ENCODE measurements at regions of chr17 and their contacts with region 1.

Region 1: DNA sequence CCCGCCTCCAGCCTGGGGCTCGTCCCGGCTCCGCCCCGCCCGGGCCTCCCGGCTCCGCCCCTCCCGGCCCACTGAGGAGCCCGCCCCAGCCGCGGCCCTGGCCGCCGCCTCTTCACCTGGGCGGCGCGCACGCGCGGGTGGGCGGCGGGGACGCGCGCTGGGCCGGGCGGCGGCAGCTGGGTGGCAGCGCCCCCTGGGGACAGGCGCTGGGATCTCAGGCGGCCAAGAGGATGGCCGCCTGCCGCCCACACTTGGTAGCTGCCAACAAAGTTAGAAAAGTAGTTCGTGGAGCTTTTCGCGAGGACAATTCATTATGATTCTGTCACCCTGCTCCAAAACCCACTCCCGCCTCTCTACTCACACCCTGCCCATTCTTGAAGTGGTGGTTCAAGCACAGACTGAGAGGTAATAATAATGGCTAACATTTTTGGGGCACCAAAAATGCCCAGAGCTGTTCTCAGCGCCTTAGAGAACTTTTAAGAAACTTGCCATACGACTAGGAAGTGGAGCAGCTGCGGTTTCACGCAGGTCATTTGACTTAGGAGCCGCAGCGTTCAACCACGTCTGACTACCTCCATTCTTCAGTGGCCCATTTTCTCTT is 340 bp upstream of the MYO1D start:
- DNase-seq: peak; percentile 85 to 97 (median 92)
- ATAC-seq: peak; percentile 94
- H3K4me3 ChIP-seq: peak overlapping the region; percentile 43 to 76
- H3K4me3 Mint-ChIP-seq: peak overlapping the region; percentile 80
- H3K27ac ChIP-seq: peak overlapping the region; percentile 8 to 66
- H3K27ac Mint-ChIP-seq: peak overlapping the region; percentile 88
- H3K4me1 ChIP-seq: peaks cover 6% of the 10 kb centered on the region
- H3K4me1 Mint-ChIP-seq: peaks cover 13% of the 10 kb centered on the region
- H3K27me3 ChIP-seq: peaks cover 0 to 3% of the 10 kb centered on the region in 2 experiments
- H3K27me3 Mint-ChIP-seq: peaks cover 7% of the 10 kb centered on the region
- CTCF ChIP-seq: peak; percentile 74

Region 2: GRCh38 chr17:31900877-31901276 is 976.4 kb before region 1 on chr17:
- CTCF ChIA-PET with region 1: no interaction called
- POLR2A ChIA-PET with region 1: no interaction called
- intact Hi-C with region 1: loop called in 1 of 2 experiments (anchors 5 kb)
- DNase-seq: no peak
- ATAC-seq: no peak
- H3K4me3 ChIP-seq: peak overlapping the region; percentile 65 to 72
- H3K4me3 Mint-ChIP-seq: no peak overlapping the region
- H3K27ac ChIP-seq: peak overlapping the region; percentile 57 to 71
- H3K27ac Mint-ChIP-seq: no peak overlapping the region
- H3K4me1 ChIP-seq: peaks cover 10% of the 10 kb centered on the region
- H3K4me1 Mint-ChIP-seq: peaks cover 18% of the 10 kb centered on the region
- H3K27me3 ChIP-seq: no peaks in the 10 kb centered on the region
- H3K27me3 Mint-ChIP-seq: no peaks in the 10 kb centered on the region
- CTCF ChIP-seq: no peak

Region 3: DNA sequence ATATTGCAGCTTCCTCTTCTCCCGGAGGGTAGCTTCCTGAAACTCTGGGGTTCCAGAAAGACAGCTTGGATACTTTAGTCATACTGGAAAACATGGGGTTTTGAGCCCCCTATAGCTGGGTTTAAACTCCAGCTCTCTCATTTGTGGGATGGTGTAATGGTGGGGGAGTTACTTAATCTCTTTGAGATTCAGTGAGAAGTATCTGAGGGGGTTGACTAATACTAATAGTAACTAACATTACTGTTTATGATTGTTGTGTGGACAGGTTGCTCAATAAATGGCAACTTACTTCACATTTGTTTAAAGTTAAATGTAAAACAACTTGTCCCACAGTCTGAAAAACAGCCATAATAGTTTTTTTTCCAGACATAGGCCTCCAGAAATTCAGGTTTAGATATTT is 945.5 kb before region 1 on chr17:
- CTCF ChIA-PET with region 1: no interaction called
- POLR2A ChIA-PET with region 1: no interaction called
- intact Hi-C with region 1: loop called (anchors 5 to 10 kb)
- DNase-seq: peak in 1 of 9 experiments; percentile 5
- ATAC-seq: no peak
- H3K4me3 ChIP-seq: no peak overlapping the region
- H3K4me3 Mint-ChIP-seq: no peak overlapping the region
- H3K27ac ChIP-seq: no peak overlapping the region
- H3K27ac Mint-ChIP-seq: no peak overlapping the region
- H3K4me1 ChIP-seq: no peaks in the 10 kb centered on the region
- H3K4me1 Mint-ChIP-seq: peaks cover 3% of the 10 kb centered on the region
- H3K27me3 ChIP-seq: no peaks in the 10 kb centered on the region
- H3K27me3 Mint-ChIP-seq: no peaks in the 10 kb centered on the region
- CTCF ChIP-seq: no peak

Region 4: GRCh38 chr17:32341857-32342602 is 535.2 kb before region 1 on chr17 and contains the start of gene C17orf75:
- CTCF ChIA-PET with region 1: no interaction called
- POLR2A ChIA-PET with region 1: no interaction called
- intact Hi-C with region 1: loop called in 1 of 2 experiments (anchors 5 kb)
- DNase-seq: peak; percentile 64 to 89 (median 79)
- ATAC-seq: peak; percentile 90
- H3K4me3 ChIP-seq: peak within 1 kb of the TSS; percentile 48 to 76
- H3K4me3 Mint-ChIP-seq: peak within 1 kb of the TSS; percentile 92
- H3K27ac ChIP-seq: peak within 1 kb of the TSS; percentile 49 to 84
- H3K27ac Mint-ChIP-seq: peak within 1 kb of the TSS; percentile 92
- H3K4me1 ChIP-seq: peaks cover 21% of the 10 kb centered on the region
- H3K4me1 Mint-ChIP-seq: peaks cover 24% of the 10 kb centered on the region
- H3K27me3 ChIP-seq: no peaks in the 10 kb centered on the region
- H3K27me3 Mint-ChIP-seq: no peaks in the 10 kb centered on the region
- CTCF ChIP-seq: no peak
- total RNA-seq, gene C17orf75: 12.5 to 14.0 TPM

Region 5: DNA sequence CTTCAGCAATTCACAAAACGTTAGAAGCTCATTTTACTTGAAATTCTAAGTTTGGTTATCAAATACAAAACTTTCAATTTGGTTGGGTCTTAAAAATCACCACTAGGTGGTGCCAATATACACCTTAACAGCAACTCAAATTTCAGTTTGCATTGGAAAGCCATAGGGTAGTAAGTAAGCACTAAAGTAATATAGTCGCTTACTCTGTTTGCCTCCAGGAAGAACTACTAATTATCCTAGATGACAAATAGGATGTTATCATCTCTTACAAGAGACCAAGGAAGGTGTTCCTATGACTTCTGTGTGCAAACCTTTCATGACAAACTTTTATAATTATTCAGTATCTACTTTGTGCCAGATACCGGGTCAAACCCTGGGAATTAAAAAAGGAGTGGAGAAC is 93.7 kb before region 1 on chr17:
- CTCF ChIA-PET with region 1: interaction called, 78 read pairs
- POLR2A ChIA-PET with region 1: interaction called, 5 read pairs
- intact Hi-C with region 1: loop called (anchors 1 kb)
- DNase-seq: peak in 2 of 9 experiments; percentile 57 to 68
- ATAC-seq: peak; percentile 62
- H3K4me3 ChIP-seq: no peak overlapping the region
- H3K4me3 Mint-ChIP-seq: no peak overlapping the region
- H3K27ac ChIP-seq: no peak overlapping the region
- H3K27ac Mint-ChIP-seq: no peak overlapping the region
- H3K4me1 ChIP-seq: no peaks in the 10 kb centered on the region
- H3K4me1 Mint-ChIP-seq: no peaks in the 10 kb centered on the region
- H3K27me3 ChIP-seq: no peaks in the 10 kb centered on the region
- H3K27me3 Mint-ChIP-seq: no peaks in the 10 kb centered on the region
- CTCF ChIP-seq: peak; percentile 87

Region 6: GRCh38 chr17:32909787-32910369 is 32.6 kb after region 1 on chr17:
- CTCF ChIA-PET with region 1: interaction called, 10 read pairs
- POLR2A ChIA-PET with region 1: interaction called, 7 read pairs
- intact Hi-C with region 1: no loop called
- DNase-seq: peak in 8 of 9 experiments; percentile 4 to 68 (median 50)
- ATAC-seq: peak; percentile 58
- H3K4me3 ChIP-seq: no peak overlapping the region
- H3K4me3 Mint-ChIP-seq: no peak overlapping the region
- H3K27ac ChIP-seq: no peak overlapping the region
- H3K27ac Mint-ChIP-seq: no peak overlapping the region
- H3K4me1 ChIP-seq: no peaks in the 10 kb centered on the region
- H3K4me1 Mint-ChIP-seq: no peaks in the 10 kb centered on the region
- H3K27me3 ChIP-seq: no peaks in the 10 kb centered on the region
- H3K27me3 Mint-ChIP-seq: peaks cover 14% of the 10 kb centered on the region
- CTCF ChIP-seq: peak; percentile 36

Region 7: DNA sequence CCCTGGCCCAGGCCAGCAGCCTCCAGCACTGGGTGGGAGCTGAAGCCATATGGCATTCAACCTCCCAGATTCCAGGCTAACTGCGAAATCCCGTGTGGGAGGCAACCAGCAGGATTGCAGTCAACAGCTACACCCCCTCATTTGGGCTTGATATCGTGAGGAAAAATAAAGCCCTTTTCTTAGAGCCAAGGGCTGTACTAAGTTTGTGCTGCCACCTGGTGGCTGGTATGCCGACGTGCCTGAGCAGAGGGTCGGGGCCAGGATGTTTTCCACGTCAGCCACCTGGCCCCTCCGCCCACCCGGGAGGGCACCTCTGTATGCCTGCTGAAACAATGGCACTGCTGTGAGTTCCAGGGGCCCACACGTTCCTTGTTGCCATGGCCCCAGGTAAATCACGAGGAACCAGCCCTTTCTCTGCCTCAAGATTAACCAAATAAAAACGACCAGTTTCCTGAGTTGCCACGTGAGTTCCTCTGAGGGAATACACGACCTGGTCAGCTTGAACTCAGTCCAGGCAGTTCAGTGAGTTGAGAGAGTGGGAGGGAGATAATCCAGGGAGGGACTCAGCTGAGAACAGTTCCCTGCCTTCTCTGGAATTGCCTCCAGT is 59.7 kb after region 1 on chr17:
- CTCF ChIA-PET with region 1: interaction called, 25 read pairs
- POLR2A ChIA-PET with region 1: no interaction called
- intact Hi-C with region 1: no loop called
- DNase-seq: peak; percentile 16 to 74 (median 66)
- ATAC-seq: peak; percentile 55
- H3K4me3 ChIP-seq: no peak overlapping the region
- H3K4me3 Mint-ChIP-seq: peak overlapping the region; percentile 26
- H3K27ac ChIP-seq: no peak overlapping the region
- H3K27ac Mint-ChIP-seq: no peak overlapping the region
- H3K4me1 ChIP-seq: peaks cover 6% of the 10 kb centered on the region
- H3K4me1 Mint-ChIP-seq: peaks cover 3% of the 10 kb centered on the region
- H3K27me3 ChIP-seq: no peaks in the 10 kb centered on the region
- H3K27me3 Mint-ChIP-seq: peaks cover 31% of the 10 kb centered on the region
- CTCF ChIP-seq: peak; percentile 66